ENCODE measurements at regions of chr15 and their contacts with region 1.

Region 1: GRCh38 chr15:63655683-63656372 is 58.6 kb downstream of the FBXL22 start:
- DNase-seq: no peak
- H3K4me3 ChIP-seq: no peak overlapping the region
- H3K27ac ChIP-seq: no peak overlapping the region
- H3K4me1 ChIP-seq: no peaks in the 10 kb centered on the region
- H3K27me3 ChIP-seq: no peaks in the 10 kb centered on the region
- CTCF ChIP-seq: no peak

Region 2: DNA sequence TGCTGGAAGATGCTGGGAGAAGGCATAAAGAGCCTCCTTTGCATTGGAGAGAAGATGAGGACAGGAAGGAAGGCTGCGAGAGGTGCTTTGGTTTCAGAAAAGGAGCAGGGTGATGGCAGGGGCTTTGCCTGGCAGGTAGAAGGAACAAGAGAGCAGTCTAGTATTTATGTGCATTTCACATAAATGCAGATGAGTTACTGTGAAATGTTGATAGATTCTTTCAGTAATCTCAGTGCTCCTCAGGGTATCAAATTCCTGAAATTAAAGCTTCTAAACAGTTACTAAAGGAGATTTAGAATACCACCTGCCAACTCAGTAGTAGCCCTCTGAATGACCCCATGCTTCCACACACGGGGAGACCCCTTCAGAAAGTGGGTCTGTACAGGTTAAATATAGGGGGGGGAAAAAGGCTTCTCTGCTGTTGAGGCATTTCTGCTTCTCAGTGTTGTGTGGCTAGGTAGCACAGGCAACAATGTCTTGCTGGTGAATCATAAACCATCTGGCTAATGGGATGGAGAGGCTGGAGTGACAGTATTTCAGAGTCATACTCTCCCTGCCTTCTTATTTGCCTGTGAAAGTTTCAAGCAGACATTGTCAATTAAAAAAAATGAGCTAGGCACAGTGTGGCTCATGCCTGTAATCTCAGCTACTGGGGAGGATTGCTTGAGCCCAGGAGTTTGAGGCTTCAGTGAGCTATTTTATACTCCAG is 73.0 kb before region 1 on chr15:
- CTCF ChIA-PET with region 1: no interaction called
- dilution Hi-C with region 1: loop called (anchors 5 kb)
- in situ Hi-C with region 1: no loop called
- intact Hi-C with region 1: no loop called
- DNase-seq: peak; percentile 82
- H3K4me3 ChIP-seq: no peak overlapping the region
- H3K27ac ChIP-seq: peak overlapping the region; percentile 26
- H3K4me1 ChIP-seq: no peaks in the 10 kb centered on the region
- H3K27me3 ChIP-seq: no peaks in the 10 kb centered on the region
- CTCF ChIP-seq: no peak

Measured in mammary epithelial cell (primary cell).